ENCODE measurements at regions of chr7 and their contacts with region 1.

Region 1: DNA sequence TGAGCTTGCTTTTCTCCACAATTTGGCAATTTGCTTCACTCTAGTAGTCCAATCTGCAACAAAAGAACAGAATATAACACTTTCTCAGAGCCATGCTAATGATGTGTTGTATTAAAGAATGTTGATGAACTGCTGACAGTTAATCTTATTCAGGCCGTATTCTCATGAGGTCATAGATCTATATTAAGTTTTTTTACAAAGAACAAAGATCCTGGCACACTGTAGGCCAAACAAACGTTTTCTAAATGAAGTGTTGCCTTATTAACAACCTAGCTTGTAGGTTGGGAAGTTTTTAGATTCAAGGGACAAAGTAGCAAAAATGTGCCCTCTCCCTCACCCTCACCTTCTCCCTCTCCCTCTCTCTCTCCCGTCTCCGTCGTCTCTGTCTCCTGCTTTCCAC is 6.8 kb downstream of the HILPDA start:
- DNase-seq: no peak
- ATAC-seq: no peak
- H3K4me3 ChIP-seq: no peak overlapping the region
- H3K27ac ChIP-seq: no peak overlapping the region
- H3K4me1 ChIP-seq: peaks cover 4% of the 10 kb centered on the region
- H3K27me3 ChIP-seq: no peaks in the 10 kb centered on the region
- CTCF ChIP-seq: no peak

Region 2: DNA sequence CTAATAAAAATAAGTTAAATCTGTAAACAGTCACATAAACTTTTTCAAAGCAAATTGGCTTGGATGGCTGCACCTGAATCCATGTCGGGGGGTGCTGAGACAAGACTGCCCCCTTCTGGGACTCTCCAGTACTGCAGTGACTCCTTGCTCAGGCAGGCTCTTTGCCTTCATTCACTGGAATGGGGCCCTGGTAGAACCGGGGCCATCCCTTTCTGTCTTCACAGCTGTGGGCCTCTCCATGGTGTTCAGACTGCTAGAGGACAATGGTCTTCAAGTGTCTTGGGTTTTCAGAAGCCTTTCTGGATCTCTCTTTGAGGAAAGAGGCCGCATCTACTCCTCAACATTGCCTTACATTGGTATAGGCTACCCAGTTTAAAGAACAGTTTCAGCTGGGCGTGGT is 36.6 kb before region 1 on chr7:
- intact Hi-C with region 1: loop called (anchors 5 kb)
- DNase-seq: no peak
- ATAC-seq: peak; percentile 91
- H3K4me3 ChIP-seq: no peak overlapping the region
- H3K27ac ChIP-seq: no peak overlapping the region
- H3K4me1 ChIP-seq: peaks cover 9% of the 10 kb centered on the region
- H3K27me3 ChIP-seq: no peaks in the 10 kb centered on the region
- CTCF ChIP-seq: peak; percentile 93

Measured in upper lobe of right lung (tissue), 1 donor.